ENCODE measurements at regions of chr10 and their contacts with region 1.

Region 1: DNA sequence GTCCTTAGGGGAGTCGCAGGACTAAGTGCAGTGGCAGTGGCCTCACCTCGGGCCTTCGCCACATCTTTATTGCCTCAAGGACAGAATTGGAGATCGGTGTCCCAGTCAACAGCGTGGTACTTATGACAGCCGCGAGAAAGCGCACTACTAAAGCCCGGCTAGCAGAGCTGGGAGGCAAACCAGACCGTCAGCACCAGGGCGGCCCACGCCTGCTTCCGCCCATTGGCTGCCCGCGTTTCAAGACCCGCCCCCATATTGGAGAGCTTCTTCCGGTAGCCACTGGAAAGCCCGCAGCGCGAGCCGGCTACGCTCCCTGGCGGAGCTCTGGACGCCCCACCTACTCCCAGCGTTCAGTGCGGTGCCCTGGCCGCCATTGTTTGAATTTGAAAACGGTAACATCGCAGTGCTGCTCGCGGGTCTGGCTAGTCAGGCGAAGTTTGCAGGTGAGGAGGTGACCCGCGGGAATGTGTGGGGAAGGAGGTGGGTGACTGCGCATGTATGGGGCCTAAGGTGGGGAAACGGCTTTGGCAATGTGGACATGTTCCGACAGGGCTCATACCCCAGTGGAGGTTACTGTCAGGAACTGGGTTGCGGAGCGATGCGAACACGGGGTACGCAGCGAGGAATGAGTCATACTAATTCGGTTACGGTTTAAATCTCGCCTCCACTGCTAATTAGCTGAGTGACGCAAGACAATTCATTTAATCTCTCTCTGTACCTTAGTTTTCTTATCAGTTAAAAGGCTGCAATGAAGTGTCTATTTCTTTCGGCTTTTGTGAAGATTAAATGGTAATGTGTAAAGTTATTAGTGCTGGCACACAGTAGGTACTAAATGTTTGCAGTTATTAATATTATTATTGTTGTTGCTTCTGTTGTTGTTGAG is at the start of gene KIF20B:
- DNase-seq: peak; percentile 94 to 98
- H3K4me3 ChIP-seq: peak within 1 kb of the TSS; percentile 79
- H3K4me1 ChIP-seq: peaks cover 33% of the 10 kb centered on the region
- H3K27me3 ChIP-seq: no peaks in the 10 kb centered on the region

Region 2: DNA sequence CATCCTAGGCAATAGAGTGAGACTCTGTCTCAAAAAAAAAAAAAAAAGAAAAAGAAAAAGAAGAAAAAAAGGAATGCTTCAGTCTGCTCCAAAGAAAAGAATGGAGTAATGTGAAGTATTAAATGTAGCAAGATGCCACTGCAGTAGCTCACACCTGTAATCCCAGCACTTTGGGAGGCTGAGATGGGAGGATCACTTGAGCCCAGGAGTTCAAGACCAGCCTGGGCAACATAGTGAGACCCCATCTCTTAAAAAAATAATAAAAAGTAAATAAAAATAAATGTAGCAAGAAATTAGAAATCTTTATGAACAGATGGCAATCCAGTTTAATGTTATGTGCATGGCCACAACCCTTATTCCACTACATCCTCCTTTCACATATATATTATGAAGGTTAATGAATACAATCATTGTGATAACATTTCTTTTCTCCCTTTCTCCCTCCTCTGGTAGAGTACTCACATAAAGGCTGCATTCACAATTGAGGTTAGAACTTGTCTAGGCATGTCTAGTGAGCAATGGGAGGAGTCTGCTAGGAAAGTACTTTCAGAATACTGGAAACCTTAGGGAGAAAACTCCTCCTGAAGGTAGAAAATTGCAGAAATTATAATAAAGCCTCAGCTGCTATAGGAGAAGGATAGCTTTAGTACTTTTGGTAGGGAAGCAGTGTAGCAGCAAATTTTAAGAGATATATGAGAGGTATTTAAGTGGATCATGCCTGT is 1858.5 kb before region 1 on chr10:
- in situ Hi-C with region 1: loop called (anchors 25 kb)
- DNase-seq: peak in 1 of 2 experiments; percentile 39
- H3K4me3 ChIP-seq: no peak overlapping the region
- H3K4me1 ChIP-seq: peaks cover 4% of the 10 kb centered on the region
- H3K27me3 ChIP-seq: no peaks in the 10 kb centered on the region

Region 3: GRCh38 chr10:89241486-89242344 is 459.8 kb before region 1 on chr10:
- in situ Hi-C with region 1: no loop called
- DNase-seq: no peak
- H3K4me3 ChIP-seq: no peak overlapping the region
- H3K4me1 ChIP-seq: 0 out of 2 replicates have a peak, but pooled peaks cover 2% of the 10 kb centered on the region
- H3K27me3 ChIP-seq: no peaks in the 10 kb centered on the region

Region 4: DNA sequence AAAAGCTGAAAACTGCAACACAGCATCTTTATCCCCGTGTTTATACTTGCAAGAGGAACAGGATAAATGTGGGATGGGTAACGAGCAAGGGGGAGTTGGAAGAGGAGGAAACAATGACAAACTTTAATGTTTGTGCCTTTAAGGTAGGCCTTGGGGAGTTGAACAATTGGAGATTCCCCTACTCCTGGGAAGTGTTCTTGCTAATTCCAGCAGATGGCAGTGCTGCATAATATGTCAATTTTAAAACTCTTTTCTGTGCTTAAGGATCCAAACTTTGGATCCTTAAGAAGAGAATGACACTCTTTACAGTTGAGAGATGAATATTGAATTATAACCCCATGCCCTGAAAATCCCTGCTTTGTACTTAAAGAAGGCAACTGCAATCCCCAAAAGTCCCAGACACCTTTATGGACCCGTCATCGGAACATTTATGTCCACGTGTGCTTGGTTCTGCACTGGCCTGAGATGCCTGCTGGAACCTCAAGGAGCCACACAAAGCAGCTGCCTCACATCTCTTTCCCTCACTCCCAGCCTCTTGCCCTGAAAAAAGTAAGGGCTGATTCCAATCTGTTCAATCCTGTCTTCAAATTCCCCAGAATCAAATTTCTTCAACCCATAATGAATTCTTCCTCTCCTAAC is 275.1 kb before region 1 on chr10:
- in situ Hi-C with region 1: loop called (anchors 25 kb)
- DNase-seq: peak; percentile 34 to 71
- H3K4me3 ChIP-seq: no peak overlapping the region
- H3K4me1 ChIP-seq: peaks cover 8% of the 10 kb centered on the region; the same call in 1 of the 2 replicates
- H3K27me3 ChIP-seq: no peaks in the 10 kb centered on the region

Region 5: DNA sequence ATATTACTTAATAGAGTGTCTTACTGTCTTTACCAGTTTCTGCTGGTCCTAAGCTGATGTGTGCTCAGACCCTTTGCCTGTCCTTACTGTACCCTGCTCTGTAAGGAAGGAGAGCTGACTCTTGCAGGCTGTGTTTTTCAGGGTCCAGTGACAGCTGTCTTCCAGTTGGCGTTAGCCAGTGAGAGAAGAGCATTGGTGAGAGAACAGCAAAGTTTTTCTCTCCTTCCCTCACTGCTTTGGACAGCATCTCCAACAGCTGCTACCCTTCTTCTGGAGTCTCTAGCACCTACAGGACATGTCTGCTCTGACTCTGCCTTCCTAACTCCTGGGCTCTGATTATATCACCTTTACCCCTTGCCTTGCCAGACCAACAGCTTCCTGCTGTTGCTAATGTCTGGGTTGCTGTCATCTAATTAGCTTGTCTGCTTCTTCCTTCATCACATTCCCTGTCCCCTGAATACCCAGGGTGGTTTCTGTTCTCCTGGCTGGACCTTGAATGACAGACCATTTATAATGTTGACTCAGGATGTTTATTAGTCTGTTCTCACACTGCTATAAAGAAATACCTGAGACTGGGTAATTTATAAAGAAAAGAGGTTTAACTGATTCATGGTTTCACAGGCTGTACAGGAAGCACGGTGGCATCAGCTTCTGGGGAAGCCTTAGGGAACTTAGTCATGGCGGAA is 33.0 kb before region 1 on chr10:
- in situ Hi-C with region 1: no loop called
- DNase-seq: no peak
- H3K4me3 ChIP-seq: no peak overlapping the region
- H3K4me1 ChIP-seq: no peaks in the 10 kb centered on the region
- H3K27me3 ChIP-seq: no peaks in the 10 kb centered on the region

Measured in HAP-1 (cell line).